ENCODE measurements at regions of chr3 and their contacts with region 1.

Region 1: GRCh38 chr3:13091898-13092611 is 18.8 kb upstream of the IQSEC1 start:
- DNase-seq: peak; percentile 71 to 96
- H3K4me3 ChIP-seq: no peak overlapping the region
- H3K27ac ChIP-seq: no peak overlapping the region
- H3K4me1 ChIP-seq: peaks cover 0 to 4% (median 3%) of the 10 kb centered on the region in 4 experiments; a peak in 5 of 7 replicates
- H3K27me3 ChIP-seq: no peaks in the 10 kb centered on the region
- CTCF ChIP-seq: peak in 2 of 3 experiments; percentile 92 to 94; a peak in 3 of 4 replicates
- EP300 ChIP-seq: no peak
- POLR2A ChIP-seq: no peak
- RAD21 ChIP-seq: peak; percentile 94 to 95

Region 2: DNA sequence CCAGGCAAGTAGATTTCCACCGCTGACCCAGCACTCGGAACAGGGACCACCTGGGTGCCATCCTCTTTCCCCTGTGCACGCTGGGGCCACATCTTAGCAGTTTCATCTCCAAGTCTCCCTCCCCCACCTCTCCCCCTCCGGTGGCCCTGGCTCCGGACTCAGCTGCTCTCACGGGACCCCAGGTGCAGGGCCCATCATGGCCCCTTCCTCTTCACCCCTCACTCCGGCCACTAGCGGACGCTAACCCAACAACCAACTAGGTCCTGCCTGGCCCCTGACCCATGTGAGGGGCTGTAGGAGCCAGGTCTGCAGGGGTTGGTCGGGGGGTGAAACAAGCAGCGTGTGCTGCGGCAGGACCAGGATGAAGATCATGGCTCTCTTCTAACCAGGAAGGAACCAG is 12.5 kb after region 1 on chr3:
- CTCF ChIA-PET with region 1: interaction called, 56 read pairs
- POLR2A ChIA-PET with region 1: no interaction called
- DNase-seq: no peak
- H3K4me3 ChIP-seq: no peak overlapping the region
- H3K27ac ChIP-seq: no peak overlapping the region
- H3K4me1 ChIP-seq: no peaks in the 10 kb centered on the region; a peak in 1 of 7 replicates
- H3K27me3 ChIP-seq: no peaks in the 10 kb centered on the region
- CTCF ChIP-seq: no peak
- EP300 ChIP-seq: no peak
- POLR2A ChIP-seq: no peak
- RAD21 ChIP-seq: no peak

Region 3: DNA sequence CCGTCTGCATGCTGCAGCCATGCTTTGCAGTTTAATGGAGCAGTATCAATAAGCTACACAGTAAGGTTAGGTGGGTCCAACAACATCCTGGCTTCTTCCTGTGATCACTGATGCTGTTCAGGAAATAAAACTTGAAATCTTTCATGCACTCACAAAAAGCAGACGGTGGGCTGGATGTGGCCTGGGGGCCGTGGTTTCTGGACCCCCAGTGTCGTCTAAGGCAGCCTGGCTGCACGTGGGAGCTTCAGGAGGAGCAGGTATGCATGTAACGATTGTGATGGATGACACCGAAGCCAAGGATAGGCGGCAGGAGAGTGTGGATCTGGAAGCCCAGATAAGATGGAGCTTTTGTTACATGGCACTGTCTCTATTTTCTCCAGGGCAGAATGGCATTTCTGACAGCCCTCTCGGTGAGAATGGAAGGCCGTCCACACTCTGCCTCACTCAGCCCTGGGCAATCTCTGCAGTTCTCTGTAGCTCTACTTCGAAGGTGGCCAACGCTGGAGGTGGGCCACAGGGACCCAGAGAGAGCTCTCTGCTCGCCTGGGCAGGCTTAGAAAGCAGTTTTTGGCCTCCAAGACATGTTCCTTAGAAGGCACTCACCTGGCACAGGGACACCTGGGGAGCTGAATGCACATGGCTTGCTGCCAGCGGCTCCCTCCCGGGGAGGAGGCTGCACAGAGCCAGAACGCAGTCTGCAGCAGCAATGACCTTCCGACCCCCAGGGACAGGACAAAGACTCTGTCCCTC is 27.6 kb after region 1 on chr3:
- CTCF ChIA-PET with region 1: interaction called, 11 read pairs
- POLR2A ChIA-PET with region 1: no interaction called
- DNase-seq: no peak
- H3K4me3 ChIP-seq: no peak overlapping the region
- H3K27ac ChIP-seq: no peak overlapping the region
- H3K4me1 ChIP-seq: no peaks in the 10 kb centered on the region; a peak in 1 of 7 replicates
- H3K27me3 ChIP-seq: no peaks in the 10 kb centered on the region
- CTCF ChIP-seq: no peak
- EP300 ChIP-seq: no peak
- POLR2A ChIP-seq: no peak
- RAD21 ChIP-seq: no peak

Region 4: GRCh38 chr3:13166243-13167063 is 74.4 kb after region 1 on chr3:
- CTCF ChIA-PET with region 1: interaction called, 14 read pairs
- POLR2A ChIA-PET with region 1: no interaction called
- DNase-seq: no peak
- H3K4me3 ChIP-seq: no peak overlapping the region
- H3K27ac ChIP-seq: no peak overlapping the region
- H3K4me1 ChIP-seq: peaks cover 5 to 16% (median 12%) of the 10 kb centered on the region in 4 experiments
- H3K27me3 ChIP-seq: no peaks in the 10 kb centered on the region
- CTCF ChIP-seq: no peak
- EP300 ChIP-seq: no peak
- POLR2A ChIP-seq: no peak
- RAD21 ChIP-seq: no peak

Region 5: GRCh38 chr3:13192471-13193213 is 100.6 kb after region 1 on chr3:
- CTCF ChIA-PET with region 1: interaction called, 32 read pairs
- POLR2A ChIA-PET with region 1: no interaction called
- DNase-seq: no peak
- H3K4me3 ChIP-seq: no peak overlapping the region
- H3K27ac ChIP-seq: no peak overlapping the region
- H3K4me1 ChIP-seq: peaks cover 0 to 7% (median 2%) of the 10 kb centered on the region in 4 experiments; a peak in 4 of 7 replicates
- H3K27me3 ChIP-seq: no peaks in the 10 kb centered on the region
- CTCF ChIP-seq: peak in 2 of 3 experiments; percentile 56 to 84; a peak in 3 of 4 replicates
- EP300 ChIP-seq: no peak
- POLR2A ChIP-seq: no peak
- RAD21 ChIP-seq: peak in 1 of 2 experiments; percentile 44; a peak in 2 of 4 replicates

Region 6: DNA sequence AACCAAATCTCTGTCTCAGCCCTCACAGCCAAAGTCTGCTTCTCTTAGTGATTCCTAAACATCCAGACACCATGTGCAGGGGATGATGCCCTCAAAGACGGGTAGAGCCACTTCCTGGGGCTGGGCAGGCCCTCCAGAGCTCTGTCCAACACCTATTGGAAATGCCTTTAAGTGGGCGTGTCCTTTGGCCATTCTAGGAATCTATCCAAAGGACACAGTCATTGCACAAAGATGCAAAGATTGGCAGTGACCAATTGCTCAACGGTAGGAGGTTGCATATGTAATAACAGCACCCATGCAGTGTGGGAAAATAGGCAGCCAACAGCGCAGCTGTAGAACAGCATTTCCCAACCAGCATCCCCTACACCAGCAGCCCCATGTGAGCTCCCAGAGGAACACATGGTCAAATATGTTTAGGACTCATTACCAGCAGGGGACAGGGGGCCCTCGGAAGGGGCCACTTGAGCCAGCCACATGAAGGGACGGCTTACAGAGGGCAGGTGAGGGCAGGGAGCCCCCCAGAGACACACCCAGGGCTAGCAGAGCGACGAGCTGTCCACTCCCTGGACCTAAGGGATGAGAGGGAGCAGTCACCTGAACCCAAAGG is 124.0 kb after region 1 on chr3:
- CTCF ChIA-PET with region 1: interaction called, 15 read pairs
- POLR2A ChIA-PET with region 1: no interaction called
- DNase-seq: no peak
- H3K4me3 ChIP-seq: no peak overlapping the region
- H3K27ac ChIP-seq: no peak overlapping the region
- H3K4me1 ChIP-seq: peaks cover 0 to 10% (median 2%) of the 10 kb centered on the region in 4 experiments; a peak in 3 of 7 replicates
- H3K27me3 ChIP-seq: no peaks in the 10 kb centered on the region
- CTCF ChIP-seq: no peak
- EP300 ChIP-seq: no peak
- POLR2A ChIP-seq: no peak
- RAD21 ChIP-seq: no peak

Region 7: GRCh38 chr3:13282986-13283876 is 191.2 kb after region 1 on chr3:
- CTCF ChIA-PET with region 1: interaction called, 10 read pairs
- POLR2A ChIA-PET with region 1: no interaction called
- DNase-seq: peak in 1 of 2 experiments; percentile 74
- H3K4me3 ChIP-seq: peak overlapping the region; percentile 18 to 67 (median 35)
- H3K27ac ChIP-seq: no peak overlapping the region
- H3K4me1 ChIP-seq: peaks cover 0 to 11% (median 6%) of the 10 kb centered on the region in 4 experiments; a peak in 5 of 7 replicates
- H3K27me3 ChIP-seq: peaks cover 7 to 26% (median 19%) of the 10 kb centered on the region in 4 experiments
- CTCF ChIP-seq: peak in 2 of 3 experiments; percentile 62 to 65; a peak in 3 of 4 replicates
- EP300 ChIP-seq: no peak
- POLR2A ChIP-seq: no peak
- RAD21 ChIP-seq: peak; percentile 56 to 69

Region 8: GRCh38 chr3:13801361-13802214 is 709.5 kb after region 1 on chr3:
- CTCF ChIA-PET with region 1: no interaction called
- POLR2A ChIA-PET with region 1: no interaction called
- DNase-seq: no peak
- H3K4me3 ChIP-seq: no peak overlapping the region
- H3K27ac ChIP-seq: no peak overlapping the region
- H3K4me1 ChIP-seq: peaks cover 0 to 3% (median 0%) of the 10 kb centered on the region in 4 experiments; a peak in 2 of 7 replicates
- H3K27me3 ChIP-seq: no peaks in the 10 kb centered on the region
- CTCF ChIP-seq: no peak
- EP300 ChIP-seq: no peak
- POLR2A ChIP-seq: no peak
- RAD21 ChIP-seq: no peak

Measured in H1 (cell line).